BJ (cell line): ENCODE measurements at regions of chr1 and their contacts with region 1.

Region 1: DNA sequence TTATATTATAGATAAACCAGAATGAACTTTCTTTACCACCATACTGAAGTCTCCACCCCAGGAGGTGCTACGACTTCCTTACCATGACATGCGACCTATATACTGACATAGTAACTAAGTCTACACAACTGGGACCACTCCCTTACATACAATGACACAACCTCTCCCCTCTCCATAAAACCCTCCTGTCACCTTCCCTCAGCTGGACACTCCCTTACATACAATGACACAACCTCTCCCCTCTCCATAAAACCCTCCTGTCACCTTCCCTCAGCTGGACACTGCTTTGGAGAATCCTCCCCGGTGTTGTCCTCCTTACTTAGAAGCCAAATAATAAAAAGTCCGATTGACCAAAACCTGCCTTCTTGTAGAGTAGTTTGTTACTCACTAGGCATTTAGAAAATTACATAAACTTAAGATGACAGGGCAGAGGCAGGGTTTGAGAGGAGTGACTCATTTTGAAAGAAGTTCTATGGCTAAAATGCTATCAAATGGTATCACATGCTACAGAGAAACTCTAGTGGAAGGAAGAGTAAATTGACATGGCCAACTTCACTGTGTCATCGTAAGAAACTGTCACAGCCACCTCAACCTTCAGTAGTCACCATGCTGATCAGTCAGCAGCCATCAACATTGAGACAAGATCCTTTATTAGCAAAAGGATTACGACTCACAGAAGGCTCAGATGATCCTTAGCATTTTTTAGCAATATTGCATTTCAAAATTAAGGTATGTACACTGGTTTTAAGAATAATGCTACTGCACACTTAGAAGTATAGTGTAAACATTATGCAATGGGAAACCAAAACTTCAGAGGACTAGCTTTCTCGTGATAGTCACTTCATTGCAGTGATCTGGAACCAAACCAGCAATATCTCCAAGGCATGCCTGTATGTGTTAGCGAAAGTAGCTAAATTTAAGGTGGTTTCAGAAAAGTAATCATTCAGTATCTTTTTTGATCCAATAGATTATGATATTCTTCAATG is 56.4 kb downstream of the AHCTF1 start:
- DNase-seq: peak; percentile 56
- H3K4me3 ChIP-seq: no peak overlapping the region
- H3K27me3 ChIP-seq: no peaks in the 10 kb centered on the region
- CTCF ChIP-seq: no peak

Region 2: GRCh38 chr1:246897302-246897701 is 22.0 kb after region 1 on chr1:
- CTCF ChIA-PET with region 1: no interaction called
- POLR2A ChIA-PET with region 1: interaction called, 17 read pairs
- DNase-seq: no peak
- H3K4me3 ChIP-seq: no peak overlapping the region
- H3K27me3 ChIP-seq: no peaks in the 10 kb centered on the region
- CTCF ChIP-seq: no peak